ENCODE measurements at regions of chr21 and their contacts with region 1.

Region 1: DNA sequence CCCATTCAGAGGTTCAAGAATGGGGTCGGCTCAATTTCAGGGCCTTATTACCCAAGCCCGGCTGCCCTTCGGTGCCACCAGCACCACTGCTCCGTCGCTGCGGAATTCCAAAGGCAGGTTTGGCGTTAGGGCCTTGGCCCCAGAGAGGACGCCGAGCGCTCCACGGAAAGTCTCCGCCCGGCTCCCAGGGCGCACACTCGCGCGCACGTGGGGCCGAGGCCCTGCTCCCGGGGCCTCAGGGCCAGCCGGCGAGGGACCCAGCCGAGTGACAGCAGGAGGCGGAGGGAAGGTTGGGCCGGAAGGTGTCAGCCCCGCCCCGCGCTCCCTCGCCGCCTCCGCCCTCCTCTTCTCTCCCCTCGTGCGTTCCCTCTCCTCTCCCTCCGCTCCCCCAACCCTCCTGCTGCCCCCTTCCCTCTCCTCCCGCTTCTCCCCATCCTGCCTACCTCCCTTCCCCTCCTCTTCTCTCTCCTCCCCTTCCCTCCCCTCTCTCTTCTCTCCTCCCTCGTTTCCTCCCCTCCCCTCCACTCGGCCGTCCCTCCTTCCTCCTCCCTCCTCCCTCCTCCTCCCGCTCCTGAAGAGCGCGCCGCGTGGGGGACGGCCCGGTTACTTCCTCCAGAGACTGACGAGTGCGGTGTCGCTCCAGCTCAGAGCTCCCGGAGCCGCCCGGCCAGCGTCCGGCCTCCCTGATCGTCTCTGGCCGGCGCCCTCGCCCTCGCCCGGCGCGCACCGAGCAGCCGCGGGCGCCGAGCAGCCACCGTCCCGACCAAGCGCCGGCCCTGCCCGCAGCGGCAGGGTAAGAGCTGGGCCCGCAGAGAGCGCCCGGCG is at the start of gene ETS2:
- DNase-seq: peak; percentile 60
- H3K4me3 ChIP-seq: peak within 1 kb of the TSS; percentile 95 to 99 (median 98)
- H3K27ac ChIP-seq: peak within 1 kb of the TSS; percentile 99 to 100 (median 100)
- H3K4me1 ChIP-seq: peaks cover 20 to 77% (median 33%) of the 10 kb centered on the region in 3 donors
- H3K27me3 ChIP-seq: no peaks in the 10 kb centered on the region
- CTCF ChIP-seq: peak in 1 of 6 experiments; percentile 16
- POLR2A ChIP-seq: peak in 3 of 4 donors; percentile 81 to 98 (median 92)
- total RNA-seq, gene ETS2: 67.5 to 118 (median 78.8) TPM

Region 2: GRCh38 chr21:38505654-38506515 is 299.7 kb before region 1 on chr21:
- intact Hi-C with region 1: no loop called
- DNase-seq: no peak
- H3K4me3 ChIP-seq: peak overlapping the region in 2 of 4 donors; percentile 6 to 49
- H3K27ac ChIP-seq: peak overlapping the region in 2 of 4 donors; percentile 48 to 51
- H3K4me1 ChIP-seq: peaks cover 0 to 17% (median 0%) of the 10 kb centered on the region in 3 donors
- H3K27me3 ChIP-seq: no peaks in the 10 kb centered on the region
- CTCF ChIP-seq: peak in 5 of 6 experiments; percentile 52 to 74 (median 55)
- POLR2A ChIP-seq: no peak

Region 3: GRCh38 chr21:38733973-38734546 is 71.5 kb before region 1 on chr21:
- intact Hi-C with region 1: loop called (anchors 10 kb)
- DNase-seq: peak; percentile 8
- H3K4me3 ChIP-seq: peak overlapping the region; percentile 24 to 59 (median 38)
- H3K27ac ChIP-seq: peak overlapping the region; percentile 60 to 79 (median 74)
- H3K4me1 ChIP-seq: peaks cover 0 to 31% (median 5%) of the 10 kb centered on the region in 3 donors
- H3K27me3 ChIP-seq: no peaks in the 10 kb centered on the region
- CTCF ChIP-seq: peak; percentile 79 to 97 (median 94)
- POLR2A ChIP-seq: no peak

Region 4: DNA sequence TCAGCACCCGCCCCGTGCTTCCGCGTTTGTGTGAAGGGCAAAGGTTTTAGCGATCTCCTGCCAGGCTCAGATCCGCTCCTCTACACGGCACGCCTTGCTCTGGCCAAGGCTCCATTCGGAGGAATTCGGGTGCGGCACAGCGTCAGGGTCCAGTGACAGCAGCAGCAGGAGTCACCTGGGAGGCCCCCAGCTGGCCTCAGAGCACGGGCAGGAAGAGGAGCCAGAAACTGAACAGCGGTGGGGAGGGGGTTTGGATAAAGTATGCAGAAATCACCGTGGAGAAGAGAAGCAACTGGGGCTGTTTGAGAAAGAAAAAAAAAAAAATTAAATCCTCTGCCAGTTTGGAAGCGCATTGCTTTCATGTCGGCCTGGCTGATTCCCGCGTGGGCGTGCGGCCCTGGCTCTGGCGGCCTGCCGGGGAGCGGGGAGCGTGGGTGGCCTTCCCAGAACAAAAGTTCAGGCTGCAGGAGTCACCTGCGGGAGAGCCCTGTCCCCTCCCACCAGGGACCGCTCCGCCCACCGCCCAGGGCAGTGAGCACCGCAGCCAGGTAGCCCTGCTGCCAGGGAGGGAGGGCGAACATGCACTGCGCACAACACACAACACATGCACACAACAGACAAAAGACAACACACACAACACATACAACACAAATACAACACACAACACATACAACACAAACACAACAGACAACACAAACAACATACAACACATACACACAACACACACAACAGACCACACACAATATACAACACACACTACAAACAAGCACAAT is 107.8 kb after region 1 on chr21:
- intact Hi-C with region 1: loop called (anchors 5 kb)
- DNase-seq: no peak
- H3K4me3 ChIP-seq: peak overlapping the region in 3 of 4 donors; percentile 18 to 33 (median 26)
- H3K27ac ChIP-seq: peak overlapping the region; percentile 89 to 95 (median 94)
- H3K4me1 ChIP-seq: peaks cover 35 to 99% (median 74%) of the 10 kb centered on the region in 3 donors
- H3K27me3 ChIP-seq: no peaks in the 10 kb centered on the region
- CTCF ChIP-seq: no peak
- POLR2A ChIP-seq: no peak

Region 5: GRCh38 chr21:38985568-38986378 is 180.2 kb after region 1 on chr21:
- intact Hi-C with region 1: loop called (anchors 10 kb)
- DNase-seq: no peak
- H3K4me3 ChIP-seq: peak overlapping the region in 1 of 4 donors; percentile 34
- H3K27ac ChIP-seq: peak overlapping the region; percentile 53 to 82 (median 82)
- H3K4me1 ChIP-seq: peaks cover 42 to 71% (median 61%) of the 10 kb centered on the region in 3 donors
- H3K27me3 ChIP-seq: no peaks in the 10 kb centered on the region
- CTCF ChIP-seq: no peak
- POLR2A ChIP-seq: no peak

Region 6: GRCh38 chr21:39137248-39138178 is 332.0 kb after region 1 on chr21:
- intact Hi-C with region 1: loop called (anchors 10 kb)
- DNase-seq: no peak
- H3K4me3 ChIP-seq: no peak overlapping the region
- H3K27ac ChIP-seq: peak overlapping the region in 3 of 4 donors; percentile 1 to 45 (median 38)
- H3K4me1 ChIP-seq: peaks cover 0 to 25% (median 11%) of the 10 kb centered on the region in 3 donors
- H3K27me3 ChIP-seq: no peaks in the 10 kb centered on the region
- CTCF ChIP-seq: no peak
- POLR2A ChIP-seq: no peak

Measured in esophagus squamous epithelium (tissue), 5 donors.